Activated CD4-positive, alpha-beta memory T cell treated with anti-CD3 and anti-CD28 coated beads, Interleukin-2, amount 10 ng/mL, durations not matched to agents 7 days and 5 days (primary cell): ENCODE measurements at regions of chr10 and their contacts with region 1.

Region 1: DNA sequence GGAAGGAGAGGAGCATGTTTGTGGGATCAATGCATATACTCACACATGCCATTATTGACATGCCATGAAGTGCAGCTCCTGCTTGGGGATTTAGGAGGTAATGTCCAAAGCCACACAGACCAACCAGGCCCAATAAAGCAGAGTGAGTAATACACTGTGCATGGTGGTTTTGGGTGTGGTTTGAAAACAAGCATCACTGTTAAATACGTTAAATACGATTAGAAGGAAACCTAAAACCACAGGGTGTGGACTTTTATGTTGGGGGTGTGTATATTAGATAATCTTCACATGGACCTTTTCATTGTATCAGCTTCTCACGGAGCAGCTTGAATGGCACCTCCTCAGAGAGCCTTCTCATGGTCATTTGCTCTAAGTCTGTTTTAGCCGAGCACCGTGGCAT is 10.4 kb upstream of the EIF3A start:
- DNase-seq: peak; percentile 73
- H3K4me3 Mint-ChIP-seq: peak overlapping the region; percentile 54
- H3K27ac Mint-ChIP-seq: peak overlapping the region; percentile 100
- H3K4me1 Mint-ChIP-seq: peaks cover 71% of the 10 kb centered on the region
- H3K27me3 Mint-ChIP-seq: no peaks in the 10 kb centered on the region

Region 2: DNA sequence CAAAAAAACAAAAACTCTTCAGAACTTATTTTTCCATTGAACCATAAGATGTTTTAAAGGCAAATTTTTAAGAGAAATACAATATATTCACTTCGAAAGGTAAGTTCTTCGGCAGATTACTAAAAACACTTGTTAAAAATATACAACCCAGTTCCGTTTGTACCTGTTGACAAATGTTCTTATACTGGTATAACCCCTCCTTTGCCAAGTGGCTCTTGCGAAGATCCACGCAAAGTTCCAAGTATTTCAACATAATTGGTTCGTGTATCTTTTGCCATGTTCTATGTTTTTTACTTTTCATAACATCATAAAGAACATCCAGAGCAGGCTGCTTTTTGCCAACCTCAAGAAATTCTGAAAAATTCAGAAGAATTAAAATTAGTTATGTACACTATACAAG is 17.4 kb before region 1 on chr10:
- CTCF ChIA-PET with region 1: interaction called, 4 read pairs
- POLR2A ChIA-PET with region 1: interaction called, 19 read pairs
- DNase-seq: no peak
- H3K4me3 Mint-ChIP-seq: no peak overlapping the region
- H3K27ac Mint-ChIP-seq: peak overlapping the region; percentile 69
- H3K4me1 Mint-ChIP-seq: peaks cover 62% of the 10 kb centered on the region
- H3K27me3 Mint-ChIP-seq: no peaks in the 10 kb centered on the region

Region 3: DNA sequence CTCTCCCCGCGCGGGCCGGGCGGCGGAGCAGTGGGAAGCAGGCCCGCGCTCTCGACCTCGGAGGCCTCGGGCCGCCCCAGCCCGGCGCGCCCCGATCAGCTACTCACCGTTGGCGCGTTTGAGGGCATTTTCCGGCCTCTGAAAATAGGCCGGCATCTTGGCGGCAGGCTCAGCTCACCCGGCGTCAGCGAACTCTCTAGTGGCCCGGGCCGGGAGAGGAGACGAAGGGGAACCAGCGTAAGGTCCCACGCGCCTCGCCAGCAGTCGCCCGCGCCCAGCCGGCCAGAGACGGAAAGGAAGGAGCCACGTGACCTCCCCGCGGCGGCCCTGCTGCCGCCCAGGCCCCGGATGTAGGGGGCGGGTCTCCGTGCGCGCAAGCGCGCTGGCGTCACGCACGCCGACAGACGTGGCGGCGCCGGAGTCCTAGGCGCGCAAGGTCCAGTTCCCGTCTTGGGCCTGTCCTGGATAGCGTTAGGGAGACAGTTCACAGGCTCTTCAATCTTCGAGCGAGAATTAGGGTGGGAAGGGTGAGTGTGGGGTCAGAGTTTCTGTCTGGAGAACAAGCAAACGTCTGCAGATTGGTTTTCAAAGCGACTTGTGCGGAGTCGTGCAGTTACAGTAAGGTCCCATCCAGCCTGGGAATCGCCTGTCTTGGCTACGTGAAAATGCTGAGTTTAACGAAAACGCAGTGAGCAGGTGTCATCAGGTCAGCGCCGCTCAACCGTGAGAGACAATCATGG is 10.3 kb before region 1 on chr10 and contains the start of gene EIF3A:
- CTCF ChIA-PET with region 1: interaction called, 23 read pairs
- POLR2A ChIA-PET with region 1: interaction called, 62 read pairs
- DNase-seq: peak; percentile 94
- H3K4me3 Mint-ChIP-seq: peak within 1 kb of the TSS; percentile 95
- H3K27ac Mint-ChIP-seq: peak within 1 kb of the TSS; percentile 93
- H3K4me1 Mint-ChIP-seq: peaks cover 50% of the 10 kb centered on the region
- H3K27me3 Mint-ChIP-seq: no peaks in the 10 kb centered on the region
- total RNA-seq, gene EIF3A: 129 to 130 TPM